HepG2 (cell line): ENCODE measurements at regions of chrX and their contacts with region 1.

Region 1: GRCh38 chrX:47467131-47467530 is 15.9 kb downstream of the ZNF41 start:
- DNase-seq: no peak
- ATAC-seq: no peak
- H3K4me3 ChIP-seq: no peak overlapping the region
- H3K27ac ChIP-seq: no peak overlapping the region
- H3K4me1 ChIP-seq: no peaks in the 10 kb centered on the region
- H3K27me3 ChIP-seq: no peaks in the 10 kb centered on the region
- CTCF ChIP-seq: no peak
- EP300 ChIP-seq: no peak
- POLR2A ChIP-seq: no peak
- RAD21 ChIP-seq: no peak

Region 2: DNA sequence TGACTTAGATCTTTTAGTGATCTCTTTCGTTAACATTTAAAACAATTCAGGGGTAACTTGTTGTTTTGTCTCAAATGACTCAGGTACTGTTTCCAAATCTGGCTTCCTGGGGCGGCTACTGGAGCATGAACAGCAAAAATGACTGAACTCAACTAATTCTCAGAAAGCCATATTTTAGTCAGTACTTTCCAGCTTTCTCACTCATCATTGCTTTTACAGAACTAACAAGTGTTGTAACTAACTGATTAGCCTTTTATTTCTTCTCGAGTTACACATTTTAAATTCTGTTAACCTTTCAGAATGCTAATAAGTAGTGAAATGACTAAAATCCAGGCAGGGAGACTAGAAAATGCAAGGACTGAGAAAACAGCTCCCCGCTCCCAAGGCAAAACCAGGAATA is 499.6 kb before region 1 on chrX:
- CTCF ChIA-PET with region 1: no interaction called
- POLR2A ChIA-PET with region 1: no interaction called
- in situ Hi-C with region 1: no loop called
- intact Hi-C with region 1: no loop called
- DNase-seq: no peak
- ATAC-seq: no peak
- H3K4me3 ChIP-seq: no peak overlapping the region
- H3K27ac ChIP-seq: no peak overlapping the region
- H3K4me1 ChIP-seq: peaks cover 50% of the 10 kb centered on the region
- H3K27me3 ChIP-seq: no peaks in the 10 kb centered on the region
- CTCF ChIP-seq: no peak
- EP300 ChIP-seq: no peak
- POLR2A ChIP-seq: no peak
- RAD21 ChIP-seq: no peak

Region 3: DNA sequence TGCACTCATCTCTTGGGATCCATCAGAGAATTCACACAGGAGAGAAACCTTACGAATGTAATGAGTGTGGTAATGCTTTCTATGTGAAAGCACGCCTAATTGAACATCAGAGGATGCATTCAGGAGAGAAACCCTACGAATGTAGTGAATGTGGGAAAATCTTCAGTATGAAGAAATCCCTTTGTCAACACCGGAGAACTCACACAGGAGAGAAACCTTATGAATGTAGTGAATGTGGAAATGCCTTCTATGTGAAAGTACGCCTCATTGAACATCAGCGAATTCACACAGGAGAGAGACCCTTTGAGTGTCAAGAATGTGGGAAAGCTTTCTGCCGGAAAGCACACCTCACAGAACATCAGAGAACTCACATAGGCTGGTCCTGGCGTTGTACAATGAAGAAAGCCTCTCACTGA is 53.9 kb before region 1 on chrX:
- CTCF ChIA-PET with region 1: no interaction called
- POLR2A ChIA-PET with region 1: no interaction called
- in situ Hi-C with region 1: loop called (anchors 10 kb)
- intact Hi-C with region 1: no loop called
- DNase-seq: no peak
- ATAC-seq: no peak
- H3K4me3 ChIP-seq: no peak overlapping the region
- H3K27ac ChIP-seq: no peak overlapping the region
- H3K4me1 ChIP-seq: no peaks in the 10 kb centered on the region
- H3K27me3 ChIP-seq: no peaks in the 10 kb centered on the region
- CTCF ChIP-seq: no peak
- EP300 ChIP-seq: no peak
- POLR2A ChIP-seq: no peak
- RAD21 ChIP-seq: no peak